ENCODE measurements at regions of chr11 and their contacts with region 1.

Region 1: GRCh38 chr11:3854977-3855807 is at the start of gene STIM1:
- DNase-seq: peak; percentile 98
- ATAC-seq: peak; percentile 93
- H3K4me3 ChIP-seq: peak within 1 kb of the TSS; percentile 94
- H3K27ac ChIP-seq: peak within 1 kb of the TSS; percentile 96
- H3K4me1 ChIP-seq: peaks cover 50% of the 10 kb centered on the region
- H3K27me3 ChIP-seq: no peaks in the 10 kb centered on the region
- CTCF ChIP-seq: peak; percentile 98
- total RNA-seq, gene STIM1: 60.7 TPM

Region 2: DNA sequence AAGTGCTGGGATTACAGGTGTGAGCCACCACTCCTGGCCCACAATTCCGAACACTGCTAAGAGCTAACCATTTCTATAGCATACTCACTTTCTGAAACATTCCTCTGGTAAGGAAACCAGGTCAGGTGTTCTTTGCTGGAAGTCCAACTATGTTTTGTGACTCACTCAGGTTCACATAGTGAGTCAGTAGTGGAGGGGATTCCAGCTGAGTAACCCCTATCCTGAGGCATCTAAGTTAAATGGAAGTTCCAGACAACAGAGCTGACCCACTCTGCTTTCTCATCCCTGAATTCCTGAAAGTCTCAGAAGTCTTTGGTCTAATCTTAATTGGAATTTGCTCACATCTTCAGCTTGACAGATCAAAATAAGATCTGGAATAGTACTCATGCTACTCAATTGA is 181.0 kb before region 1 on chr11:
- intact Hi-C with region 1: no loop called
- DNase-seq: no peak
- ATAC-seq: no peak
- H3K4me3 ChIP-seq: no peak overlapping the region
- H3K27ac ChIP-seq: no peak overlapping the region
- H3K4me1 ChIP-seq: no peaks in the 10 kb centered on the region
- H3K27me3 ChIP-seq: no peaks in the 10 kb centered on the region
- CTCF ChIP-seq: no peak

Region 3: GRCh38 chr11:4065601-4066377 is 210.6 kb after region 1 on chr11:
- intact Hi-C with region 1: loop called (anchors 5 kb)
- DNase-seq: no peak
- ATAC-seq: no peak
- H3K4me3 ChIP-seq: no peak overlapping the region
- H3K27ac ChIP-seq: no peak overlapping the region
- H3K4me1 ChIP-seq: peaks cover 7% of the 10 kb centered on the region
- H3K27me3 ChIP-seq: no peaks in the 10 kb centered on the region
- CTCF ChIP-seq: no peak